Prostate gland (tissue), 2 donors: ENCODE measurements at regions of chr6 and their contacts with region 1.

Region 1: DNA sequence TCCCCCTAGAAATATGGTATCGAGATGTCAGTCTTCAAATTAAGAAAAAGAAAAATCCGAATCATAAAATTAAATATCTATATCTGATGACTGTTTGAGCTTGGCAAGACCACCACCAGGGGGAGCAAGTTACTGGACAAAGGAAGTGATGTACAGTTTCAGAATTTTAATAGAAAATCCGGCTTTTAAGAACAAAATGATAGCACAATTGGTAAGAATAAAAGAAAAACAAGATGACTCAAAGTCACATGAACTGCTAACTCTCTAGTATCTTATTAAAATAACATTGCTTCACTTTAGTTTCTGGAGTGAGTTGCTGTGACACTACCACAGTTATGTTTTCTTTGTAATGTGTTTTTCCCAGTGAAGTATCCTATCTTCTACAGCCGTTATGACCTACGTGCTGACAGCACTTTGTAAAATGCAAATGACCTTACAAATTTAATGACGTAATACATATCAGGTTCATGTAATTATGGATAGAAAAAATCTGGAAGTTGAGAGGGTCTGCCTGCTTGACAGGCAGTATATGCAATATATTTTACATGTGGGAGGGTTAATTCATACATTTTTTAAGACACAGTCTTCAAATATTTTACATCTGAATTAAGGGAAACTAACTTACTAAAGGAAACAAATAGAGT is 405.3 kb upstream of the HS3ST5 start:
- DNase-seq: no peak
- H3K4me3 ChIP-seq: no peak overlapping the region
- H3K27ac ChIP-seq: no peak overlapping the region
- H3K4me1 ChIP-seq: no peaks in the 10 kb centered on the region
- H3K27me3 ChIP-seq: no peaks in the 10 kb centered on the region
- CTCF ChIP-seq: peak in 3 of 4 experiments; percentile 21 to 58 (median 37)
- POLR2A ChIP-seq: no peak

Region 2: GRCh38 chr6:115896538-115897129 is 1148.5 kb after region 1 on chr6:
- intact Hi-C with region 1: loop called (anchors 5 kb)
- DNase-seq: no peak
- H3K4me3 ChIP-seq: no peak overlapping the region
- H3K27ac ChIP-seq: no peak overlapping the region
- H3K4me1 ChIP-seq: no peaks in the 10 kb centered on the region
- H3K27me3 ChIP-seq: no peaks in the 10 kb centered on the region
- CTCF ChIP-seq: peak in 3 of 4 experiments; percentile 33 to 40 (median 34)
- POLR2A ChIP-seq: no peak